Naive thymus-derived CD4-positive, alpha-beta T cell (primary cell): ENCODE measurements at regions of chr2 and their contacts with region 1.

Region 1: DNA sequence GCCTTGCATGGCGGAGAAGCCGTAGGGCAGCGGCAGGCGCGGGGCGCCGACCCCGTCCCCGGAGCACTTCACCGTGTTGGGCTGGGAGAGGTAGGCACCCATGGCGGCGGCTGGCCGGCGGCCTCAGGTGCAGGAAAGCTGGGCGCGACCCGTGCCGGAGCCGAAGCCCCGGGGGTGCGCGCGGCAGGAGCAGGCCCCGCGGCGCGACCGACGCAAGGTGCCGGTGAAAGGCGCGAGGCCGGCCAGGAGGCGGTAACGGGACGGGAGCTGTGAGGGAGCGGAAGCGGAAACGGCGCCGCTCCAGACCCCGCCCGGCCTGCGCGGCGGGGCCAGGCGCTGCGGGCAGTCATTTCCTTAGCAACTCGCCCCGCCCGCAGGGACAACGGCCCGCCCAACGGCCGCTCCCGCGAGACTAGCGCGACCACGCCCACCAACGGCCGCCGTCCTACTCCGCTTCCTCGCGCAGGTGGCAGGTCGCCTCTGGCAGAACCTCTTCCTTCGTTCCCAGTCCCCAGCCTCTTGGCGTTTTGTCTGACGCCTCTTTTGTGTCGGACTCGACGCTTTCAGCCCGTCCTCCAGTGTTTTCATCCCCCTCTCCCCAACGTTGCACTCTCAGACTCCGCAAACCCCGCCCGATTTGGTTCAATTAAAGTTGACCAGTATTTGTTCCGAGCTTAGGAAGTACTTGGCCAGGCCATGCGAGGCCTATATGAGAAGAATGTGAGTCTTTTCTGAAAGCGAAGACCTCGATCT is at the start of gene PPM1G:
- DNase-seq: peak; percentile 92 to 98 (median 95)
- ATAC-seq: peak; percentile 99
- H3K4me3 ChIP-seq: peak within 1 kb of the TSS; percentile 92
- H3K4me3 Mint-ChIP-seq: peak within 1 kb of the TSS; percentile 87 to 96 (median 92)
- H3K27ac ChIP-seq: peak within 1 kb of the TSS; percentile 89
- H3K27ac Mint-ChIP-seq: peak within 1 kb of the TSS; percentile 89 to 98 (median 95)
- H3K4me1 ChIP-seq: peaks cover 13 to 17% of the 10 kb centered on the region in 2 donors
- H3K4me1 Mint-ChIP-seq: peaks cover 28 to 50% (median 35%) of the 10 kb centered on the region in 7 donors
- H3K27me3 ChIP-seq: no peaks in the 10 kb centered on the region
- H3K27me3 Mint-ChIP-seq: peaks cover 0 to 7% (median 0%) of the 10 kb centered on the region in 5 donors
- total RNA-seq, gene PPM1G: 39.5 to 101 (median 45.1) TPM

Region 2: GRCh38 chr2:27152102-27152785 is 257.3 kb before region 1 on chr2:
- CTCF ChIA-PET with region 1: no interaction called
- POLR2A ChIA-PET with region 1: no interaction called
- intact Hi-C with region 1: no loop called
- DNase-seq: no peak
- ATAC-seq: no peak
- H3K4me3 ChIP-seq: no peak overlapping the region
- H3K4me3 Mint-ChIP-seq: no peak overlapping the region
- H3K27ac ChIP-seq: no peak overlapping the region
- H3K27ac Mint-ChIP-seq: no peak overlapping the region
- H3K4me1 ChIP-seq: no peaks in the 10 kb centered on the region
- H3K4me1 Mint-ChIP-seq: no peaks in the 10 kb centered on the region
- H3K27me3 ChIP-seq: no peaks in the 10 kb centered on the region
- H3K27me3 Mint-ChIP-seq: peaks cover 0 to 9% (median 4%) of the 10 kb centered on the region in 5 donors

Region 3: GRCh38 chr2:27211829-27212627 is 197.5 kb before region 1 on chr2 and contains the starts of genes ATRAID and SLC5A6:
- CTCF ChIA-PET with region 1: no interaction called
- POLR2A ChIA-PET with region 1: interaction called, 3 read pairs
- intact Hi-C with region 1: loop called (anchors 1 to 10 kb)
- DNase-seq: peak; percentile 86 to 93 (median 92)
- ATAC-seq: peak; percentile 93
- H3K4me3 ChIP-seq: peak within 1 kb of the TSS; percentile 91
- H3K4me3 Mint-ChIP-seq: peak within 1 kb of the TSS; percentile 89 to 100 (median 99)
- H3K27ac ChIP-seq: peak within 1 kb of the TSS; percentile 100
- H3K27ac Mint-ChIP-seq: peak within 1 kb of the TSS; percentile 99 to 100 (median 100)
- H3K4me1 ChIP-seq: peaks cover 14 to 17% of the 10 kb centered on the region in 2 donors
- H3K4me1 Mint-ChIP-seq: peaks cover 18 to 49% (median 42%) of the 10 kb centered on the region in 7 donors
- H3K27me3 ChIP-seq: no peaks in the 10 kb centered on the region
- H3K27me3 Mint-ChIP-seq: no peaks in the 10 kb centered on the region
- total RNA-seq, gene ATRAID: 71.0 to 113 (median 90.7) TPM
- total RNA-seq, gene SLC5A6: 25.6 to 203 (median 44.3) TPM

Region 4: GRCh38 chr2:27322766-27323595 is 86.5 kb before region 1 on chr2 and contains the start of gene MPV17:
- CTCF ChIA-PET with region 1: no interaction called
- POLR2A ChIA-PET with region 1: interaction called, 4 read pairs
- intact Hi-C with region 1: loop called (anchors 1 kb)
- DNase-seq: peak; percentile 65 to 87 (median 82)
- ATAC-seq: peak; percentile 98
- H3K4me3 ChIP-seq: peak within 1 kb of the TSS; percentile 99
- H3K4me3 Mint-ChIP-seq: peak within 1 kb of the TSS; percentile 91 to 100 (median 99)
- H3K27ac ChIP-seq: peak within 1 kb of the TSS; percentile 95
- H3K27ac Mint-ChIP-seq: peak within 1 kb of the TSS; percentile 93 to 100 (median 99)
- H3K4me1 ChIP-seq: peaks cover 17 to 22% of the 10 kb centered on the region in 2 donors
- H3K4me1 Mint-ChIP-seq: peaks cover 14 to 30% (median 23%) of the 10 kb centered on the region in 7 donors
- H3K27me3 ChIP-seq: no peaks in the 10 kb centered on the region
- H3K27me3 Mint-ChIP-seq: no peaks in the 10 kb centered on the region
- total RNA-seq, gene MPV17: 55.7 to 119 (median 94.4) TPM

Region 5: GRCh38 chr2:27380626-27381545 is 28.6 kb before region 1 on chr2 and contains the start of gene ZNF513:
- CTCF ChIA-PET with region 1: no interaction called
- POLR2A ChIA-PET with region 1: interaction called, 20 read pairs
- intact Hi-C with region 1: loop called (anchors 1 kb)
- DNase-seq: peak; percentile 71 to 88 (median 81)
- ATAC-seq: peak; percentile 97
- H3K4me3 ChIP-seq: peak within 1 kb of the TSS; percentile 67
- H3K4me3 Mint-ChIP-seq: peak within 1 kb of the TSS; percentile 85 to 94 (median 90)
- H3K27ac ChIP-seq: peak within 1 kb of the TSS; percentile 85
- H3K27ac Mint-ChIP-seq: peak within 1 kb of the TSS; percentile 88 to 97 (median 94)
- H3K4me1 ChIP-seq: peaks cover 9 to 10% of the 10 kb centered on the region in 2 donors
- H3K4me1 Mint-ChIP-seq: peaks cover 18 to 33% (median 30%) of the 10 kb centered on the region in 7 donors
- H3K27me3 ChIP-seq: no peaks in the 10 kb centered on the region
- H3K27me3 Mint-ChIP-seq: no peaks in the 10 kb centered on the region
- total RNA-seq, gene ZNF513: 15.6 to 23.2 (median 19.2) TPM

Region 6: GRCh38 chr2:27489498-27490397 is 80.3 kb after region 1 on chr2 and contains the start of gene IFT172:
- CTCF ChIA-PET with region 1: no interaction called
- POLR2A ChIA-PET with region 1: interaction called, 3 read pairs
- intact Hi-C with region 1: loop called (anchors 1 kb)
- DNase-seq: peak; percentile 90 to 100 (median 99)
- ATAC-seq: peak; percentile 96
- H3K4me3 ChIP-seq: peak within 1 kb of the TSS; percentile 63
- H3K4me3 Mint-ChIP-seq: peak within 1 kb of the TSS; percentile 78 to 92 (median 84)
- H3K27ac ChIP-seq: peak within 1 kb of the TSS; percentile 80
- H3K27ac Mint-ChIP-seq: peak within 1 kb of the TSS; percentile 82 to 99 (median 98)
- H3K4me1 ChIP-seq: peaks cover 11 to 16% of the 10 kb centered on the region in 2 donors
- H3K4me1 Mint-ChIP-seq: peaks cover 8 to 29% (median 19%) of the 10 kb centered on the region in 7 donors
- H3K27me3 ChIP-seq: peaks cover 0 to 7% of the 10 kb centered on the region in 2 donors
- H3K27me3 Mint-ChIP-seq: peaks cover 13 to 20% (median 17%) of the 10 kb centered on the region in 5 donors
- total RNA-seq, gene IFT172: 12.3 to 35.8 (median 22.2) TPM

Region 7: GRCh38 chr2:27663463-27664249 is 254.2 kb after region 1 on chr2 and contains the starts of genes SLC4A1AP and SUPT7L:
- CTCF ChIA-PET with region 1: no interaction called
- POLR2A ChIA-PET with region 1: interaction called, 13 read pairs
- intact Hi-C with region 1: loop called in 1 of 2 experiments (anchors 1 kb)
- DNase-seq: peak; percentile 74 to 88 (median 82)
- ATAC-seq: peak; percentile 89
- H3K4me3 ChIP-seq: peak within 1 kb of the TSS; percentile 98
- H3K4me3 Mint-ChIP-seq: peak within 1 kb of the TSS; percentile 94 to 100 (median 100)
- H3K27ac ChIP-seq: peak within 1 kb of the TSS; percentile 95
- H3K27ac Mint-ChIP-seq: peak within 1 kb of the TSS; percentile 98 to 100 (median 99)
- H3K4me1 ChIP-seq: peaks cover 18 to 20% of the 10 kb centered on the region in 2 donors
- H3K4me1 Mint-ChIP-seq: peaks cover 35 to 75% (median 64%) of the 10 kb centered on the region in 7 donors
- H3K27me3 ChIP-seq: no peaks in the 10 kb centered on the region
- H3K27me3 Mint-ChIP-seq: no peaks in the 10 kb centered on the region
- total RNA-seq, gene SLC4A1AP: 14.7 to 27.0 (median 23.2) TPM
- total RNA-seq, gene SUPT7L: 37.9 to 58.6 (median 46.5) TPM